Activated naive CD4-positive, alpha-beta T cell treated with anti-CD3 and anti-CD28 coated beads for 36 hours (primary cell): ENCODE measurements at regions of chr1 and their contacts with region 1.

Region 1: DNA sequence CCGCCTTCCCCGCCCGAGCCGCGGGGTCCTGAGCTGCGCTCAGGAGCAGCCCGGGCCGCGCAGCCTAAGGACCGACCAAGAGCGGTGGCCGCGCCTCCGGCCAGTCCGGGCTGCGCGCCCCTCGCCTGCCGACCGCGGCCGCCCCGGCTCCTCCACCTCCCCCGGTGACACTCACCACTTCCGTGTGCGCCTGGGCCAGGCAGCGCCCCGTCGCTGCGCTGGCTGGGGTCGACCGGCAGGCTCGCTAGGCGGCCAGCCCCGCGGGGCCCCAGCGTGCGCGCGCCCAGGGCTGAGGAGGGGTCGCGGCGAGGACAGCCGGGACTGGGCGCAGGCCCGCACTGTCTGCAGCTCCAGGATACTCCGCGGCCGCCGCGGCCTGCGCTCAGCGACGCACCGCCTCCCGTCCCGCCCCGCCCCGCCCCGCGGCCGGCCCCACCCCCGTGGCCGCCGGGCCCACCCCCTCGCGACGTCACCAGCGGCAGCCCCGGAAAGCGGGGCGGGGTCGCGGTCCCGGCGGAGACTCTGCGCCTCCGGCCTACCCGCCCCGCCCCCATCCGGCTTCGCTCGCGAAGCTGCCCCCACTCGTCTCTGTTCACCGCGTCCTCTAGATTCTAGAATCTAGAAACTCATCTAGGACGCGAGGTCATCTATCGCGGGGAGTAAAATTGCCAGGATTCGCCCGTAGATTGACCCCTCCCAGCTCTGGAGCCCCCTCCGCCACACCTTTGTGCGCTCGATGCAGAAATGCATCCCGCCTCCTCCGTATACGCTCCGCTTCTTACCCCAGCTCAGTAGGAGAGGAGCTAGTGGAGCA is at the start of gene JAK1:
- DNase-seq: peak; percentile 87
- H3K4me3 Mint-ChIP-seq: peak within 1 kb of the TSS; percentile 89
- H3K27ac Mint-ChIP-seq: peak within 1 kb of the TSS; percentile 90
- H3K4me1 Mint-ChIP-seq: peaks cover 46% of the 10 kb centered on the region
- H3K27me3 Mint-ChIP-seq: no peaks in the 10 kb centered on the region
- total RNA-seq, gene JAK1: 139 to 140 TPM

Region 2: DNA sequence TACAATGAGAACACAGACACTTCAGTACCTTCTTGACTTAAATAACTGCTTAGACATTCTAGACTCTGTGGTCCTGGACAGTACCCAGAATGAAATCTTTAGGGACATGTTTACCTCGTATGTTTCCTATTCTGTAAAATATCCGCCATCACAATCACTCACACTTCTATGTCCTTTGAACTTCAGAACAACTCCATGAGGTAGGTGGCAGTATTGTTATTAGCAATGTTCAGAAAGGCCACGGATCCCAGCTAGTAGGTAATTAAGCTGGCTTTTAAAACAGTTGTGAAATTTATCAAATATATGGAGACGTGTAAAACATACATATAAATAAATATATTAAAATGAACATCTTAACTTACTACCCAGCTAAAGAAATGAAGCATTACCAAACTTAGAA is 413.1 kb before region 1 on chr1:
- CTCF ChIA-PET with region 1: no interaction called
- intact Hi-C with region 1: loop called (anchors 2 kb)
- DNase-seq: no peak
- H3K4me3 Mint-ChIP-seq: no peak overlapping the region
- H3K27ac Mint-ChIP-seq: no peak overlapping the region
- H3K4me1 Mint-ChIP-seq: peaks cover 41% of the 10 kb centered on the region
- H3K27me3 Mint-ChIP-seq: no peaks in the 10 kb centered on the region

Region 3: GRCh38 chr1:64877151-64877550 is 89.2 kb before region 1 on chr1:
- CTCF ChIA-PET with region 1: interaction called, 12 read pairs
- intact Hi-C with region 1: loop called (anchors 1 kb)
- DNase-seq: peak; percentile 68
- H3K4me3 Mint-ChIP-seq: no peak overlapping the region
- H3K27ac Mint-ChIP-seq: peak overlapping the region; percentile 76
- H3K4me1 Mint-ChIP-seq: peaks cover 58% of the 10 kb centered on the region
- H3K27me3 Mint-ChIP-seq: no peaks in the 10 kb centered on the region

Region 4: DNA sequence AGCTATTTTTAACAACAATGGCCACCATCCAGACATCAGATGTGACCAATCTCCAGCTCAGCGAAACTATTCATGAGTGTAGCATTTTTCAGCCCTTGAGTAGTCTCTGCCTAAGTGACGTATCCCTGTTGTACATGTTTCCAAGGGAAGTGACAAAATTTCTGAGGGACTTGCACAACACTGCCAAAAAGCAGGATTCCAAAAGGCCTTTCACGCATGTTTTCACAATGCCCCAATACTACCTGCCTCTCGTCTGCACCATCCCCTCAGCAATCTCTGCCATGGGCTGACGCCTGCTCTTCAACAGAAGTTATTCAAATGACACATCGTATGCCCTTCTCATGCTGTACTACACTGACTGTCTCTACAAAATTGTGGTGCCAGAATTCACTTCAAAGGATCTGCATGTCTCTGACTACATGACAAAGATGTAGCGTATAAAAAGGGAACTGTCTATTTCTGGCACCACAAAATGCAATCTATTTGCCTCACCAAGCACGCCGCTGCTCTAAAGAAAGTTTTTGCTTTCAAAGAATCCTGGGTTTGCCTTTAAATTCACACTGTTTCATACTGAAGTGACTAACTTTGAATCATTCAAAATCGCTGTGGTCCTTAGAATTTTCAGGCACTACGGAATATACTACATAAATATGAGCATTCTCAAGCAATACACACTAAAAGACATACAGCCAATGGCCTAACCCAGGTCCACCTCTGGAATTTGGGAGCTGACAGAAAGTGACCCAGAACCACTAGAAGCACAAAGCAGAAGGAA is 32.9 kb before region 1 on chr1:
- CTCF ChIA-PET with region 1: interaction called, 4 read pairs
- intact Hi-C with region 1: loop called (anchors 1 kb)
- DNase-seq: peak; percentile 56
- H3K4me3 Mint-ChIP-seq: peak overlapping the region; percentile 33
- H3K27ac Mint-ChIP-seq: peak overlapping the region; percentile 24
- H3K4me1 Mint-ChIP-seq: peaks cover 79% of the 10 kb centered on the region
- H3K27me3 Mint-ChIP-seq: no peaks in the 10 kb centered on the region

Region 5: DNA sequence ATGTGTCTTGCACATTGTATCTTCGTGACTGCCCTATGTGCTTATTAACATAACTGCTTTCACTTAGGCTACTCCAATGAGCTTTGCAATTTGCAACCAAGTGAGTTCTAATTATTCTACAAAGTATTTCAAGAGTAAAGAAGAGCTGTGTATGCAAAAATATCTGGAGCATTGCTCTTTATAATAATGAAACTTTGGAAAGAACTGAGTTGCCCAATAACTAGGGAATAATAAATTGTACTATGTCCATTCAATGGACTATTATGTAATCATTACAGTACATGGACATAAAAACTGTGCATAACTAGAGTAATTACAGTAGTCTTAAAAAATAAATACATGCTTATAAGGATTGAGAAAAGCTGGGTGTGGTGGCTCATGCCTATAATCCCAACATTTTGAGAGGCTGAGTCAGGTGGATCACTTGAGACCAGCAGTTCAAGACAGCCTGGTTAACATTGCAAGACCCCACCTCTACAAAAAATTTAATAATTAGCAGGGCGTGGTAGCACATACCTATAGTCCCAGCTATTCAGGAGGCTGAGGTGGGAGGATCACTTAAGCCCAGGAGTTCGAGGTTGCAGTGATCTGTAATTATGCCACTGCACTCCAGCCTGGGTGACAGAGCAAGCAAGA is 70.3 kb after region 1 on chr1:
- CTCF ChIA-PET with region 1: interaction called, 3 read pairs
- intact Hi-C with region 1: loop called (anchors 2 kb)
- DNase-seq: no peak
- H3K4me3 Mint-ChIP-seq: no peak overlapping the region
- H3K27ac Mint-ChIP-seq: no peak overlapping the region
- H3K4me1 Mint-ChIP-seq: peaks cover 11% of the 10 kb centered on the region
- H3K27me3 Mint-ChIP-seq: no peaks in the 10 kb centered on the region

Region 6: DNA sequence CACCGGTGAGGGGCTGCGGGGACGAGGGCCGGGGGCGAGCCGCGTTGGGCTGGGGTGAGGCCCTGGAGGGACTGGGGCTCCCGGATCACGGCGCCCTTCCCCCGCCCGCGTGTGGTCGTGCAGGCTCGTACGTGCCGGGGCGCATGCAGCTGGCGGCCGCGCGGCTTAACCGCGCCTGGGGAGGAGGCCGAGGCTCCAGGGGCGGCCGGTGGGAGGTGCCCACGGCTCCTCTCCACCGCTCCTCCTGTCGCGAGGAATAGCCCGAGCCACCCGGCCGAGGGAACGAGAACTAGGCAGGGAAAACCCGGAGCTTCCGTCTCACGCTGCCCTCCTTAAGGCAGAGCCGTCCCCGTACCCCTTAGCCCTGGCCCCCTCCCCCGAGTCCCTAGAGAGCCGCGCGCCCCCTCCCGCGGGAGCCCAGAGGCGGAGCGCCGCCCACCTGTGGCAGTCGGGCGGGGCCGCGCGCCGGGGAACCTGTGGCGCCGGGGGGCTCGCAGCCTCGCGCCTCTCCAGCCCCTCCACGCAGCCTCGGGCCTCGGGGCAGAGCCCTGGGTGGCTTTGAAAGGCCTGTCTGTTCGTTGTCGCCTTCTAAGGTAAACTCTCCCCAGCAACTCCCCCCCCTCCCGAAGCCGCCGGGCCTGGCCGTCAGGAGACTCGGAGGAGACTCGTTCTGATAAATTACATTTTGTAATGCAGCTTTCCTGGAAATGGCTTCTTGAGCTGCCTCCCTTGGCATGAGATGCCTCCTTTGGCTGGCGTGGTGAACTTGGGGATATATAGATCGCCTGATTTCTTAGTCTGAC is 182.4 kb after region 1 on chr1:
- CTCF ChIA-PET with region 1: no interaction called
- intact Hi-C with region 1: no loop called
- DNase-seq: peak; percentile 41
- H3K4me3 Mint-ChIP-seq: peak overlapping the region; percentile 80
- H3K27ac Mint-ChIP-seq: no peak overlapping the region
- H3K4me1 Mint-ChIP-seq: peaks cover 10% of the 10 kb centered on the region
- H3K27me3 Mint-ChIP-seq: peaks cover 47% of the 10 kb centered on the region

Region 7: GRCh38 chr1:65265651-65266351 is 299.4 kb after region 1 on chr1:
- CTCF ChIA-PET with region 1: no interaction called
- intact Hi-C with region 1: loop called (anchors 10 kb)
- DNase-seq: peak; percentile 35
- H3K4me3 Mint-ChIP-seq: peak overlapping the region; percentile 35
- H3K27ac Mint-ChIP-seq: no peak overlapping the region
- H3K4me1 Mint-ChIP-seq: peaks cover 27% of the 10 kb centered on the region
- H3K27me3 Mint-ChIP-seq: peaks cover 16% of the 10 kb centered on the region